CD8-positive, alpha-beta memory T cell (primary cell): ENCODE measurements at regions of chr1 and their contacts with region 1.

Region 1: GRCh38 chr1:174932587-174932986 is 67.2 kb upstream of the CACYBP start:
- DNase-seq: no peak
- H3K4me3 ChIP-seq: no peak overlapping the region
- H3K4me3 Mint-ChIP-seq: no peak overlapping the region
- H3K27ac ChIP-seq: no peak overlapping the region
- H3K27ac Mint-ChIP-seq: no peak overlapping the region
- H3K4me1 ChIP-seq: no peaks in the 10 kb centered on the region
- H3K4me1 Mint-ChIP-seq: peaks cover 8 to 19% (median 12%) of the 10 kb centered on the region in 3 donors
- H3K27me3 ChIP-seq: no peaks in the 10 kb centered on the region
- H3K27me3 Mint-ChIP-seq: no peaks in the 10 kb centered on the region

Region 2: DNA sequence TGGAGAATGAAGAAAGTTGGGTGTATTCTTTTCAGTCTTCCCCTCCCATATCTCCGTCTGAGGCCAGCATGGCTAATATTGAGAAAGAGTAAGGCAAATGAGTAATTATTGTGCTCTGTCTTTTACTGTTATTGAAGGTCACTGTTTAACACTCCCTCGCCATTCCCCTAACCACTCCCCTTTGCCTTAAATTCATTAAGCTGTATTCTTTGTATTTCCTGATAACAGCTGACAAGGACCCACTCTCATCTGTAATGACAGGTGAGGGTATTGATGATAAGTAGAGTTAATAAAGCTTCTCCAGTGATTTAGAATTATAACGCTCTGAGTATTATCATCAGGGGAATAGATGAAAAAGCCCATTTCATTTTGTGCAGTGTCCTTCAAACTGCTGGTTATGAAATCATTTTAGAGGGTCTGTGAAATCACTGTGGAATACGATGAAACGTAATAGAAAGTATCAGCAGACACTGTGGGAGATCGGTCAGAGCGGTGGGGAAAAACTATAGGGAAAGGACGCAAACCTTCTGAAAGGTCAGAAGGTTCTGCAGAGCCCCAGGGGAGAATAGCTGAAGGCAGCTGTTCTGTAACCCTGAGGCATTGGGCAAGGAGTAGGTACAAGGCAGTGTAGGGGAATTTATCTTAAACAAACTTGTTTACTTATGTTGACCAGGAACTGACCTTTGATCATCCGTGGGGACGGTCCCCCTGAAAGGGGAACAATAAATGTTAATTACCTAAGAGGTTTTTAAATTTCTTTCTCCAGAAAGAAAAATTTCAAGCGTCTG is 20.9 kb after region 1 on chr1:
- CTCF ChIA-PET with region 1: no interaction called
- POLR2A ChIA-PET with region 1: interaction called, 14 read pairs
- DNase-seq: no peak
- H3K4me3 ChIP-seq: no peak overlapping the region
- H3K4me3 Mint-ChIP-seq: no peak overlapping the region
- H3K27ac ChIP-seq: no peak overlapping the region
- H3K27ac Mint-ChIP-seq: peak overlapping the region in 5 of 8 donors; percentile 5 to 76 (median 66)
- H3K4me1 ChIP-seq: peaks cover 5% of the 10 kb centered on the region
- H3K4me1 Mint-ChIP-seq: peaks cover 26 to 47% (median 39%) of the 10 kb centered on the region in 3 donors
- H3K27me3 ChIP-seq: no peaks in the 10 kb centered on the region
- H3K27me3 Mint-ChIP-seq: no peaks in the 10 kb centered on the region